Mammary epithelial cell (primary cell): ENCODE measurements at regions of chr12 and their contacts with region 1.

Region 1: GRCh38 chr12:12704593-12705230 is 8.7 kb upstream of the GPR19 start:
- DNase-seq: peak; percentile 84
- H3K4me3 ChIP-seq: no peak overlapping the region
- H3K27ac ChIP-seq: no peak overlapping the region
- H3K4me1 ChIP-seq: peaks cover 5% of the 10 kb centered on the region
- H3K27me3 ChIP-seq: no peaks in the 10 kb centered on the region
- CTCF ChIP-seq: peak; percentile 99 to 100

Region 2: GRCh38 chr12:11228296-11228879 is 1476.3 kb before region 1 on chr12:
- CTCF ChIA-PET with region 1: no interaction called
- dilution Hi-C with region 1: no loop called
- in situ Hi-C with region 1: no loop called
- intact Hi-C with region 1: loop called (anchors 2 kb)
- DNase-seq: peak; percentile 39
- H3K4me3 ChIP-seq: no peak overlapping the region
- H3K27ac ChIP-seq: no peak overlapping the region
- H3K4me1 ChIP-seq: no peaks in the 10 kb centered on the region
- H3K27me3 ChIP-seq: no peaks in the 10 kb centered on the region
- CTCF ChIP-seq: peak; percentile 91 to 93

Region 3: DNA sequence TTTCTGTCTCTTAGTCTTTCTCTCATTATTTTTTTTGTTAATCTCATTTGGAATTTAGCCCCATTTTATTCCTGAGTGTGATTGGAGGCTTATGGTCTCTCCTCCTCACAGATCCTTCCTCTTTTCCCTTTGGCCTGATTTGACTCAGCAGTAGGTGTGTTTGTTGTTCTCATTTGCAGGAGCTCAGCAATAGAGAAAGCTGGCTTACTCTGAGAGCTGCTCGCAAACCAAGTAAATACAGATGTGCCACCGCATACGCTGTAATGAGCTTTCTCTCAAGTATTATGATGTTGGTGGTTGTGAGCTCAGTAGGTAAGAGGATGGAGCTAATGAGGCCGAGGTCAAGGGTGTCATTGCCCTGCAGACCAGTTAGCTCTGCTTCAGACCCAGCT is 848.7 kb before region 1 on chr12:
- CTCF ChIA-PET with region 1: no interaction called
- dilution Hi-C with region 1: no loop called
- in situ Hi-C with region 1: no loop called
- intact Hi-C with region 1: no loop called
- DNase-seq: no peak
- H3K4me3 ChIP-seq: no peak overlapping the region
- H3K27ac ChIP-seq: no peak overlapping the region
- H3K4me1 ChIP-seq: peaks cover 29% of the 10 kb centered on the region
- H3K27me3 ChIP-seq: no peaks in the 10 kb centered on the region
- CTCF ChIP-seq: no peak

Region 4: GRCh38 chr12:12081836-12082497 is 622.7 kb before region 1 on chr12:
- CTCF ChIA-PET with region 1: no interaction called
- dilution Hi-C with region 1: no loop called
- in situ Hi-C with region 1: loop called in 1 of 2 experiments (anchors 25 kb)
- intact Hi-C with region 1: loop called (anchors 1 kb)
- DNase-seq: peak; percentile 48
- H3K4me3 ChIP-seq: no peak overlapping the region
- H3K27ac ChIP-seq: no peak overlapping the region
- H3K4me1 ChIP-seq: no peaks in the 10 kb centered on the region
- H3K27me3 ChIP-seq: no peaks in the 10 kb centered on the region
- CTCF ChIP-seq: peak; percentile 28 to 39

Region 5: DNA sequence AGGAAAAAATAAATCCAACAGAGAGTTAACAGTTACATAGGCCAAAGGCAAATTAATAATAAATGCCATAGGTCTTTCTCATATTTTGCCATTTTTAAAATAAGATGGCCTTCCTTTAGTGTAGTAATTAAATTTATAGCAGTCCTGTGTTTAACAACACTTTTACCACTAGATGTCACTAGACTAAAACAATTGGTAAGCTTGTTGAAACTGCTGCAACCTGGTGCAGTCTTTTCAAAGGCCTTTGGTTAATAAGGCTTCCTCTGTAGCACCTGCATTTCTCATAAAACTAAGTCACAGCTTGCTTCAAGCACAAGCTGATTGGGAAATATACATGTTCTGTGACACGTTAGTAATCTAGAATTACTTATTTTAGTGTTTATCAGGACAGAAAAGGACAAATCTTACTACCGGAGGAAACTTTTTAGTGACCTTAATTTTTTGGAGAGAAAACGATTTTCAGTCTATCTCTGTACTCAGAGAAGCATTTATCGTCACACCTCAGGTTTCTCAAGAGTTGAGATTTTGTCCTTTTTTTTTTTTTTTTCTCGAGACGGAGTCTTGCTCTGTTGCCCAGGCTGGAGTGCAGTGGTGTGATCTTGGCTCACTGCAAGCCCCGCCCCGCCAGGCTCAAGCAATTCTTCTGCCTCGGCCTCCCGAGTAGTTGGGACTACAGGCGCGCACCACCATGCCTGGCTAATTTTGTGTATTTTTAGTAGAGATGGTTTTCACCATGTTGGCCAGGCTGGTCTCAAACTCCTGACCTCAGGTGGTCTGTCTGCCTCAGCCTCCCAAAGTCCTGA is 327.9 kb before region 1 on chr12:
- CTCF ChIA-PET with region 1: no interaction called
- dilution Hi-C with region 1: no loop called
- in situ Hi-C with region 1: loop called (anchors 10 kb)
- intact Hi-C with region 1: loop called (anchors 1 kb)
- DNase-seq: peak; percentile 68
- H3K4me3 ChIP-seq: no peak overlapping the region
- H3K27ac ChIP-seq: no peak overlapping the region
- H3K4me1 ChIP-seq: no peaks in the 10 kb centered on the region
- H3K27me3 ChIP-seq: no peaks in the 10 kb centered on the region
- CTCF ChIP-seq: peak; percentile 61 to 67

Region 6: DNA sequence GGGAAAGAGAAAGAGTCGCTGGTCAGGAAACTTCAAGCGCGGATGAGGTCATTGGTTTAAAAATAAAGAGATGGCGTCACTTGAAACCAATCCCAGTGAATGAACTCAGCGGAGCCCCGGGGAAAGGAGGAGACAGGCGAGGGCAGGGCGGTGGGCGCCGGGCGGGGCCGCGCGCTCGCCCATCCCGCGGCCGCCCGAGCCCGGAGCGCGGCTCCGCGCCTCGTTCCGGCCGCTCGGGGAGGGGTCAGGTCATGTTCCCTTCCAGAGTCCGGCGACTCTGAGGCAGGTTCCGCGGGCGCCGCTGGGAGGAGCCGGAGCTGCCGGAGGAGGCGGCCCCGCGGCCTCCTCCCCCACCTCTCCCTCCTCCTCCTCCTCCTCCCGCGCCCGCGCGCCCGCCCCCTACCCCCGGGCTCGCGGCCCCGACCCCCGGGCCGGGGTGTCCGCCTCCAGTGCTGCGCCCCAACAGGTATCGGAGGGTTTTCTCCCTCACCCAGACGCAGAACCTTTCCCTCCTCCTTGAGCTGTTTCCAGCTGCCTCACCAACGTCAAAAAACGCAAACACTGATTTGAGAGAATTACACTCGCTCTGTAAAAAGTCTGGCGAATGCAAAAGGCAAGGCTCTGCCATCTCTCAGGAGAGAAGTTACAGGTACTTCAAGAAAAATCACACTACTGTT is 142.0 kb before region 1 on chr12 and contains the start of gene DUSP16:
- CTCF ChIA-PET with region 1: no interaction called
- dilution Hi-C with region 1: no loop called
- in situ Hi-C with region 1: no loop called
- intact Hi-C with region 1: loop called (anchors 1 kb)
- DNase-seq: peak; percentile 91
- H3K4me3 ChIP-seq: peak within 1 kb of the TSS; percentile 74 to 87 (median 81)
- H3K27ac ChIP-seq: peak within 1 kb of the TSS; percentile 96
- H3K4me1 ChIP-seq: peaks cover 20% of the 10 kb centered on the region
- H3K27me3 ChIP-seq: no peaks in the 10 kb centered on the region
- CTCF ChIP-seq: peak in 1 of 2 donors; percentile 7
- total RNA-seq, gene DUSP16: 11.2 to 16.4 TPM

Region 7: DNA sequence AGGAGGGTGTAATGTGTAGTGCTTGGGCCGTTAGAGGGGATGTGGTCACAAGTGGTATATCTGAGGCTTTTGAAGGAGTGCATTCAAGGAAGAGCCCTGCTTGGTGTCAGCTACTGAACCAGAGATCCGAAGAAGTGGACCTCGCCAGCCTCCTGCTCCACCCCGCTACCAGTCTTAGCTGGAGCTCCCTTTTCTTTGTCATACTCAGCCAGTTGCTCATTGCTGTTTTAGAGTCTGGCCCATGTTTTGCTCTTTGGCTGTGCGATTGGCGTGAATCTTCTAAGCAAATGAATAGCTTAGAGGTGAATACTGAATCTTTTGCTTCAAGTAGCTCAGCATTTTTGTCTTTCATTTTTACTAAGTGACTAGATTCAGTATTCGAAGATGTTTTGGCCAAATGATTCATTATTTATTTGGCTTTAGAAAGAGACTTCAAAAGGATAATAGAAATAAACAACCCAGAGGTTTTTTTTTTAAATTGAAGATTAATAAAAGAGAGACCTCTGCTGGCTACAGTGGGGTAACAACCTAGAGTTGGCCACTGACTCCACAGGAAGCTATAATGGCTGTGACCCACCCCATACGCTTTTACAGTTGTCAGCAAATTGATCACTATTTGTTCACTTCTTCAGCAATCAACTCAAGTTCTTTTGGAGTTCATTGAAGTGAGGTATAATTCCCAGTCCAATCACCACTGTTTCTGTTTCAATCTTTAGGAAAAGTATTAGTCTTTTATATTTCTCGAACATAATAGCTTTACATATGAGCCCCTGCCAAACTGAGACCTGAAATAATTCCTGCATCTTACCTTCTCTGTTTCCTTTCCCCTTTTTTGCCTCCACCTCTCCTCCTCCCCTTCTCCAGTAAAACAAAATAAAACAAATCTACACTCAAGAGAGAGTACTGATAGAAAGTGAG is 32.3 kb after region 1 on chr12:
- CTCF ChIA-PET with region 1: no interaction called
- dilution Hi-C with region 1: no loop called
- in situ Hi-C with region 1: no loop called
- intact Hi-C with region 1: loop called (anchors 1 kb)
- DNase-seq: peak; percentile 27
- H3K4me3 ChIP-seq: no peak overlapping the region
- H3K27ac ChIP-seq: no peak overlapping the region
- H3K4me1 ChIP-seq: peaks cover 6% of the 10 kb centered on the region
- H3K27me3 ChIP-seq: no peaks in the 10 kb centered on the region
- CTCF ChIP-seq: peak; percentile 46 to 53

Region 8: GRCh38 chr12:12749433-12749832 is 44.7 kb after region 1 on chr12:
- CTCF ChIA-PET with region 1: no interaction called
- dilution Hi-C with region 1: no loop called
- in situ Hi-C with region 1: no loop called
- intact Hi-C with region 1: no loop called
- DNase-seq: no peak
- H3K4me3 ChIP-seq: no peak overlapping the region
- H3K27ac ChIP-seq: no peak overlapping the region
- H3K4me1 ChIP-seq: peaks cover 12% of the 10 kb centered on the region
- H3K27me3 ChIP-seq: no peaks in the 10 kb centered on the region
- CTCF ChIP-seq: no peak